WTC11 (cell line): ENCODE measurements at regions of chr17 and their contacts with region 1.

Region 1: GRCh38 chr17:3683054-3683511 is 12.9 kb downstream of the P2RX5 start:
- DNase-seq: peak; percentile 64
- ATAC-seq: peak; percentile 85
- H3K4me3 Mint-ChIP-seq: no peak overlapping the region
- H3K27ac Mint-ChIP-seq: no peak overlapping the region
- H3K4me1 Mint-ChIP-seq: 0 out of 2 replicates have a peak, but pooled peaks cover 5% of the 10 kb centered on the region
- H3K27me3 Mint-ChIP-seq: no peaks in the 10 kb centered on the region; the same call in none of the 2 replicates
- CTCF ChIP-seq: peak; percentile 98

Region 2: GRCh38 chr17:3636154-3636907 is 46.8 kb before region 1 on chr17 and contains the starts of genes CTNS and SHPK:
- CTCF ChIA-PET with region 1: interaction called, 20 read pairs
- POLR2A ChIA-PET with region 1: no interaction called
- DNase-seq: peak; percentile 97
- ATAC-seq: peak; percentile 97
- H3K4me3 Mint-ChIP-seq: peak within 1 kb of the TSS; percentile 97
- H3K27ac Mint-ChIP-seq: peak within 1 kb of the TSS; percentile 100
- H3K4me1 Mint-ChIP-seq: peaks cover 27% of the 10 kb centered on the region
- H3K27me3 Mint-ChIP-seq: no peaks in the 10 kb centered on the region
- CTCF ChIP-seq: no peak
- total RNA-seq, gene CTNS: 10.7 to 11.9 TPM (median 11.8 TPM) in 3 replicates
- total RNA-seq, gene SHPK: 29.0 to 29.3 TPM (median 29.2 TPM) in 3 replicates

Region 3: DNA sequence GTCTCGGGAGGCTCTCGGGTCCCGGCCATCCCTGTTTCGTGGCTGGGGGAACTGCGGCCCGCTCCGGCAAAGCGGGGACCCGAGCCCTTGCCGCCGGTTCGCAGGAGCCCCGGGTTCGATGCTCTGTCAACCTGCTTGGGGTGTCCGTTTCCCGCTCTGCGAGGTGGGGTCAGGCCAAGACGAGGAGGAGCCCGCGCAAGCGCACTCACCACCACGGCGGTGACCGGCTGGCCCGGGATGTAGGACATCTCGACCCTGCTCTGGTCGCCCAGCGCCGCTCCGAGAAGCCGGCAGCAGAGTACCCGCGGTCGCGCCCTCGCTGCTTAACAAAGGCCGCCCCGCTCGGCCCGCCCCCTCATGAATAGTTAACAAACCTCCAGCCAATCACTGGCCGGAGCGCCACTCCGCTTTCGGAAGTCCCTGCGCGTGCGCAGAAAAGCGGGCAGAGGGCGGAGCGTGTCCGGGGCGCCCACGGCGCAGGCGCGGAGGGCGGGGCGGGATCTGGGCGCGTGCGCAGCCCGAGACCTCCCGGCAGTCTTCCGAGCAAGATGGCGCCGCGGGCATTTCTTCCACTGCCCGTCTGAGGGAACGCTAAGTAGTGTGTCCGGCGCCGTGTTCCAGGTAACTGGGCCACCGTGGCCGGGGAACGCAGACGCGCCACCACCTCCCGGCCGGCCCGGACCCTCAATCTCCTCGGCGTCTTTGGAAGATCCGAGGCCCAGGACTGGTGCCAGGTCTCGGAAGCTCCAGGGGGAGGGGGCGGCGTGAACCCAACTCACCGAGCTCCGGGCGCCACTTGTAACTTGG is 14.6 kb before region 1 on chr17 and contains the starts of genes EMC6 and TAX1BP3:
- CTCF ChIA-PET with region 1: interaction called, 30 read pairs
- POLR2A ChIA-PET with region 1: interaction called, 4 read pairs
- DNase-seq: peak; percentile 99
- ATAC-seq: peak; percentile 94
- H3K4me3 Mint-ChIP-seq: peak within 1 kb of the TSS; percentile 99
- H3K27ac Mint-ChIP-seq: peak within 1 kb of the TSS; percentile 96
- H3K4me1 Mint-ChIP-seq: peaks cover 20% of the 10 kb centered on the region
- H3K27me3 Mint-ChIP-seq: no peaks in the 10 kb centered on the region
- CTCF ChIP-seq: no peak
- total RNA-seq, gene EMC6: 81.2 to 89.7 TPM (median 86.0 TPM) in 3 replicates
- total RNA-seq, gene TAX1BP3: 71.9 to 76.9 TPM (median 76.2 TPM) in 3 replicates

Region 4: DNA sequence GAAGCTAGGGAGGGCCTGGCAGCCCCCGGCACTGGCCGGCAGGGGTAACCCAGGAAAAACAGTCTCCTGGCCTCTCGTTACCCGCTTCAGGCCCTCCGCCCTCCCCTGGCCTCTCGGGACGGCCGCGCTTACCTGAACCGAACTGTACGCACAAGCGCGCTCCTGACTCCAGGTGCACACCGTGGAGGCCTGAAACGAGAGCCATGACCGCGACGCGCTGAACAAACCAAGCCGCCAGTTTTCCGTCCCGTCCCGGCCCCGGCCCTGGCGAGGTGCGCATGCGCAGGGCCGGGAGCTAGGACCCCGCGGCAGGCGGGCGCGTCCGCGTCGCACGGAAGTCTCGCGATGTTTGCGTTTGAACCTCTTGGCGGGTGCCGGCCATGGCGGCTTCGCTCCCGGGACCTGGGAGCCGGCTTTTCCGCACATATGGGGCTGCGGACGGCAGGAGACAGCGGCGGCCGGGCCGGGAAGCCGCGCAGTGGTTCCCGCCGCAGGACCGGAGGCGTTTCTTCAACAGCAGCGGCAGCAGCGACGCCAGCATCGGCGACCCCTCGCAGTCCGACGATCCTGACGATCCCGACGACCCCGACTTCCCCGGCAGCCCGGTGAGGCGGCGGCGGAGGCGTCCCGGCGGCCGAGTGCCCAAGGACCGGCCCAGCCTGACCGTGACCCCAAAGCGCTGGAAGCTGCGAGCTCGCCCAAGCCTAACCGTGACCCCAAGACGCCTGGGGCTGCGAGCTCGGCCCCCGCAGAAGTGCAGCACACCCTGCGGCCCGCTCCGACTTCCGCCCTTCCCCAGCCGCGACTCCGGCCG is 40.7 kb after region 1 on chr17 and contains the start of gene HASPIN:
- CTCF ChIA-PET with region 1: interaction called, 40 read pairs
- POLR2A ChIA-PET with region 1: no interaction called
- DNase-seq: peak; percentile 91
- ATAC-seq: peak; percentile 88
- H3K4me3 Mint-ChIP-seq: peak within 1 kb of the TSS; percentile 96
- H3K27ac Mint-ChIP-seq: peak within 1 kb of the TSS; percentile 85
- H3K4me1 Mint-ChIP-seq: peaks cover 29% of the 10 kb centered on the region
- H3K27me3 Mint-ChIP-seq: no peaks in the 10 kb centered on the region
- CTCF ChIP-seq: no peak
- total RNA-seq, gene HASPIN: 30.0 to 30.8 TPM (median 30.4 TPM) in 3 replicates

Region 5: GRCh38 chr17:3754458-3755334 is 71.6 kb after region 1 on chr17:
- CTCF ChIA-PET with region 1: interaction called, 10 read pairs
- POLR2A ChIA-PET with region 1: no interaction called
- DNase-seq: peak; percentile 100
- ATAC-seq: peak; percentile 88
- H3K4me3 Mint-ChIP-seq: peak overlapping the region; percentile 64
- H3K27ac Mint-ChIP-seq: no peak overlapping the region
- H3K4me1 Mint-ChIP-seq: peaks cover 15% of the 10 kb centered on the region
- H3K27me3 Mint-ChIP-seq: peaks cover 2% of the 10 kb centered on the region
- CTCF ChIP-seq: no peak

Region 6: DNA sequence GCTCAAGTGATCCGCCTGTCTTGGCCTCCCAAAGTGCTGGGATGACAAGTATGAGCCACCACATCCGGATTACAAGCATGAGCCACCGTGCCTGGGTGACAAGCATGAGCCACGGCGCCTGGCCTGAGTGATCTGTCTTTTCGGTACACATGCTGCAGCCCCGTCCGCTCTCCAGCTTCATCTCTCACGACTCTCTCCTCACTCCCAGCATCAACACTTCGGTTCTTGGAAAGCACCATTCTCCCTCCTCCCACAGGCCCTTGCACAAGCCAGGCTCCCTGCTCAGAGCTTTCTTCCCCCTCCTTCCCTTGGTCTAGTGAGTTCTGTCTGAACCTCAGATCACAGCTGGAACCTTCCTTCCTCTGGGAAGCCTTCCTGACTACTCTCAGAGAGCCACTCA is 169.5 kb after region 1 on chr17:
- CTCF ChIA-PET with region 1: no interaction called
- POLR2A ChIA-PET with region 1: no interaction called
- DNase-seq: no peak
- ATAC-seq: no peak
- H3K4me3 Mint-ChIP-seq: no peak overlapping the region
- H3K27ac Mint-ChIP-seq: no peak overlapping the region
- H3K4me1 Mint-ChIP-seq: no peaks in the 10 kb centered on the region
- H3K27me3 Mint-ChIP-seq: no peaks in the 10 kb centered on the region; the same call in none of the 2 replicates
- CTCF ChIP-seq: no peak

Region 7: DNA sequence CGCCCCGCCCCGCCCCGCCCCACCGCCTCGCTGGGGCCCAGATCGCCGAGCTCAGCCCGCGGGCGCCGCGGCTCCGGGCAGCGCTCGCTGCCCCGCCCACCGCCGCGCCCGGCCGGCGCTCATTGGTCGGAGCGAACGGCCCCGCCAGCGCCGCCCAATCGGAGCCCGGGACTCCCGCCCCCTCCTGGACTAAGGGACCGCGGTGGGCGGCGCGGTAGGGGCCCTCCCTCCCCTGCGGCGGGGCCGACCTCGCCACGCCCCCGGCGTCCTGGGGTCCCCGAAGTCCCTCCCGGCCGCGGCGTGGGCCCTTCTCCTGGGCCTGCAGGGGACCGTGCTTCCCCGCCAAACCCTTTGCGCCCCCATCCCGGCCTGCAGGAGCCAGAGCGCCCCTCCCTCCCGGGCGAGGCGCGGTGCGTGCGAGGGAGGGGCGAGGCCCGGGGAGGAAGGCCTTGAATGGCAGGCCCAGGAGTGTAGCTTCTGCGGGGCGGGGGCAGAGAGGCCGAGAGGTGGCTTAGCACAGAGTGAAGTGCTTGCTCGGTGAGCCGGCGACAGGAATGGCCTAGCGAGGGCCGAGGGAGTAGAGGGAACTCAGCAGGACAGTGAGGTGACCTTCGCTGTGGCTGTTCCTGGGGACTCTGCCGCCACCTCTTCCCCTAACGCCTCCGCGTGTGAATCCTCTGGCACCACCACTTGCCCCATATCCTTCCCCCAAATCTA is 210.1 kb after region 1 on chr17 and contains the start of gene CAMKK1:
- CTCF ChIA-PET with region 1: interaction called, 10 read pairs
- POLR2A ChIA-PET with region 1: no interaction called
- DNase-seq: peak; percentile 86
- ATAC-seq: peak; percentile 80
- H3K4me3 Mint-ChIP-seq: peak within 1 kb of the TSS; percentile 68
- H3K27ac Mint-ChIP-seq: peak within 1 kb of the TSS; percentile 90
- H3K4me1 Mint-ChIP-seq: peaks cover 29% of the 10 kb centered on the region
- H3K27me3 Mint-ChIP-seq: peaks cover 7% of the 10 kb centered on the region; the same call in 1 of the 2 replicates
- CTCF ChIP-seq: no peak
- total RNA-seq, gene CAMKK1: 8.0 to 9.6 TPM (median 8.7 TPM) in 3 replicates